ENCODE measurements at regions of chr3 and their contacts with region 1.

Region 1: GRCh38 chr3:128095222-128095703 is 28.3 kb downstream of the RUVBL1 start:
- DNase-seq: peak; percentile 73 to 80 (median 76)
- H3K4me3 ChIP-seq: no peak overlapping the region
- H3K4me3 Mint-ChIP-seq: no peak overlapping the region
- H3K27ac ChIP-seq: no peak overlapping the region
- H3K27ac Mint-ChIP-seq: peak overlapping the region in 4 of 7 donors; percentile 45 to 66 (median 54)
- H3K4me1 ChIP-seq: no peaks in the 10 kb centered on the region
- H3K4me1 Mint-ChIP-seq: peaks cover 3 to 6% (median 5%) of the 10 kb centered on the region in 4 donors
- H3K27me3 ChIP-seq: no peaks in the 10 kb centered on the region
- H3K27me3 Mint-ChIP-seq: no peaks in the 10 kb centered on the region

Region 2: DNA sequence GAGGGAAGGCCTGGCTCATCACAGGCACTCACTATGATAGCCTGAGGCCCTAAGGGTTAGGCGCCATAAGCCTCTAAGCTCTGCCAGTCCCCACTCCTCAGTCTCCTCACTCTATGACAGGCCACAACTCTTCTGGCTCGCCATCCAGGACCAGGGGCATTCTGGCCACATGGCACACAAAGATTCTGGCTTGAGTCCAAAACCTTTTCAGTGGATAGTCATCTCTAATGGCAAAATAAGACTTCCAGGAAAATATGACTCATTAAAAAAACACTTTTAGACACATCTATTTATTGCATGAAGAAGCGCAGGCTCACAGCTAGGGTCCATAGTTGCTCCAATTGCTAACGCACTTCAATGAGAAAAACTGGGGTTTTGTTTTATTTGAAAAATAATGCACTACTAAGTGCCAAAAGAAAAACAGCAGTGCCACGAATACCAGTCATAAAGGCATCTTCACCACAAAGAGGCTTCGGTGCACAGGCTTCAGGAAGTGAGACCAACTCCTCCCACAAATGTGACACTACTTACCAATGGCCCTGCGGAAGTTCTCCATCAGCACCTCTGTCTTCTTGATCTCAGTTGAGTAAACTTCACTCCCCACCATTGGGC is 17.2 kb after region 1 on chr3:
- CTCF ChIA-PET with region 1: interaction called, 46 read pairs
- POLR2A ChIA-PET with region 1: interaction called, 5 read pairs
- intact Hi-C with region 1: no loop called
- DNase-seq: peak; percentile 63 to 76 (median 69)
- H3K4me3 ChIP-seq: no peak overlapping the region
- H3K4me3 Mint-ChIP-seq: peak overlapping the region in 7 of 8 donors; percentile 32 to 88 (median 72)
- H3K27ac ChIP-seq: peak overlapping the region; percentile 55
- H3K27ac Mint-ChIP-seq: peak overlapping the region; percentile 95 to 99 (median 97)
- H3K4me1 ChIP-seq: peaks cover 40% of the 10 kb centered on the region
- H3K4me1 Mint-ChIP-seq: peaks cover 38 to 51% (median 43%) of the 10 kb centered on the region in 4 donors
- H3K27me3 ChIP-seq: no peaks in the 10 kb centered on the region
- H3K27me3 Mint-ChIP-seq: no peaks in the 10 kb centered on the region

Region 3: DNA sequence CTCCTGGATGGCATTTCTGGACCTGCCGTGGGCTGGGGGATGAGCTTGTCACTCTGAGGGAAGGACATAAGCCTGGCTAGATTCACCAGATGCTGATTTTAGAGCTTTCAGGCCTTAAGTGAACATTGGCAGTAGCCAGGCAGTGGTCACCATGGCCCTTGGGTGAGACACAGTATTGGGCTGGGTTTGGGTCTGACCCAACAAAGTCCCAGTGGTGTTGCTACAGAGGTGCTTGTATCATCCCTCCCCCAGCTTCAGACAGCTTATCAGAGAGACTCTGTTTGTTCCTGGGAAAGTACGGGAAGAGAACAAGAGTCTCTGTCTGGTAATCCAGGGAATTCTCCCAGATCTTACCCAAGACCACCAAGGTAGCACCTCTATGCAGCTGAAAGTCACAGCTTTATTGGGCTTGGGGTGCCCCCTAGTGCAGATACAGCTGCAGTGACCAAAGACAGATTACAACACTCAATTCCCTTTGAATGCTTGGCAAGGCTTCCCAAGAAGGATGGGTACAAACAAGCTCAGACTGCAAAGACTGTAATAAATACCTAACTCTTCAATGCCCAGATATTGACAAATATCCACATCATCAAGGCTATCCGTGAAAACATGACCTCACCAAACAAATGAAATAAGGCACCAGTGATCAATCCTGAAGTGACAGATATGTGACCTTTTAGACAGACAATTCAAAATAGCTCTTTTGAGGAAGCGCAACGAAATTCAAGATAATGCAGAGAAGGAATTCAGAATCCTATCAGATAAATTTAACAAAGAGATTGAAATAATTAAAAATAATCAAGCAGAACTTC is 38.2 kb after region 1 on chr3:
- CTCF ChIA-PET with region 1: interaction called, 256 read pairs
- POLR2A ChIA-PET with region 1: interaction called, 9 read pairs
- intact Hi-C with region 1: loop called (anchors 1 kb)
- DNase-seq: peak in 4 of 5 donors; percentile 40 to 57 (median 44)
- H3K4me3 ChIP-seq: no peak overlapping the region
- H3K4me3 Mint-ChIP-seq: no peak overlapping the region
- H3K27ac ChIP-seq: no peak overlapping the region
- H3K27ac Mint-ChIP-seq: peak overlapping the region in 3 of 7 donors; percentile 36 to 62 (median 48)
- H3K4me1 ChIP-seq: no peaks in the 10 kb centered on the region
- H3K4me1 Mint-ChIP-seq: peaks cover 0 to 3% (median 0%) of the 10 kb centered on the region in 4 donors
- H3K27me3 ChIP-seq: no peaks in the 10 kb centered on the region
- H3K27me3 Mint-ChIP-seq: peaks cover 0 to 5% of the 10 kb centered on the region in 2 donors

Region 4: GRCh38 chr3:128426128-128426921 is 331.1 kb after region 1 on chr3:
- CTCF ChIA-PET with region 1: interaction called, 5 read pairs
- POLR2A ChIA-PET with region 1: no interaction called
- intact Hi-C with region 1: loop called (anchors 1 kb)
- DNase-seq: peak in 4 of 5 donors; percentile 49 to 66 (median 52)
- H3K4me3 ChIP-seq: no peak overlapping the region
- H3K4me3 Mint-ChIP-seq: no peak overlapping the region
- H3K27ac ChIP-seq: no peak overlapping the region
- H3K27ac Mint-ChIP-seq: no peak overlapping the region
- H3K4me1 ChIP-seq: peaks cover 3% of the 10 kb centered on the region
- H3K4me1 Mint-ChIP-seq: peaks cover 0 to 6% (median 0%) of the 10 kb centered on the region in 4 donors
- H3K27me3 ChIP-seq: no peaks in the 10 kb centered on the region
- H3K27me3 Mint-ChIP-seq: peaks cover 13 to 17% of the 10 kb centered on the region in 2 donors

Region 5: GRCh38 chr3:128607710-128608048 is 512.4 kb after region 1 on chr3:
- CTCF ChIA-PET with region 1: interaction called, 11 read pairs
- POLR2A ChIA-PET with region 1: no interaction called
- intact Hi-C with region 1: no loop called
- DNase-seq: no peak
- H3K4me3 ChIP-seq: peak overlapping the region in 1 of 2 donors; percentile 57
- H3K4me3 Mint-ChIP-seq: peak overlapping the region in 4 of 8 donors; percentile 26 to 46 (median 33)
- H3K27ac ChIP-seq: no peak overlapping the region
- H3K27ac Mint-ChIP-seq: no peak overlapping the region
- H3K4me1 ChIP-seq: peaks cover 4% of the 10 kb centered on the region
- H3K4me1 Mint-ChIP-seq: peaks cover 0 to 1% (median under 1%) of the 10 kb centered on the region in 4 donors
- H3K27me3 ChIP-seq: peaks cover 5% of the 10 kb centered on the region
- H3K27me3 Mint-ChIP-seq: no peaks in the 10 kb centered on the region